GM12878 (cell line): ENCODE measurements at regions of chr7 and their contacts with region 1.

Region 1: GRCh38 chr7:71801996-71802395 is 610.1 kb downstream of the CALN1 start:
- DNase-seq: no peak
- ATAC-seq: no peak
- H3K4me3 ChIP-seq: no peak overlapping the region
- H3K27ac ChIP-seq: no peak overlapping the region
- H3K4me1 ChIP-seq: no peaks in the 10 kb centered on the region
- H3K27me3 ChIP-seq: no peaks in the 10 kb centered on the region
- CTCF ChIP-seq: no peak
- EP300 ChIP-seq: no peak
- POLR2A ChIP-seq: no peak
- RAD21 ChIP-seq: no peak

Region 2: GRCh38 chr7:71868797-71869196 is 66.8 kb after region 1 on chr7:
- CTCF ChIA-PET with region 1: no interaction called
- POLR2A ChIA-PET with region 1: no interaction called
- RAD21 ChIA-PET with region 1: no interaction called
- SMC1A ChIA-PET with region 1: no interaction called
- in situ Hi-C with region 1: no loop called
- intact Hi-C with region 1: loop called (anchors 10 kb)
- DNase-seq: no peak
- ATAC-seq: no peak
- H3K4me3 ChIP-seq: no peak overlapping the region
- H3K27ac ChIP-seq: no peak overlapping the region
- H3K4me1 ChIP-seq: no peaks in the 10 kb centered on the region
- H3K27me3 ChIP-seq: no peaks in the 10 kb centered on the region
- CTCF ChIP-seq: no peak
- EP300 ChIP-seq: no peak
- POLR2A ChIP-seq: no peak
- RAD21 ChIP-seq: no peak

Region 3: DNA sequence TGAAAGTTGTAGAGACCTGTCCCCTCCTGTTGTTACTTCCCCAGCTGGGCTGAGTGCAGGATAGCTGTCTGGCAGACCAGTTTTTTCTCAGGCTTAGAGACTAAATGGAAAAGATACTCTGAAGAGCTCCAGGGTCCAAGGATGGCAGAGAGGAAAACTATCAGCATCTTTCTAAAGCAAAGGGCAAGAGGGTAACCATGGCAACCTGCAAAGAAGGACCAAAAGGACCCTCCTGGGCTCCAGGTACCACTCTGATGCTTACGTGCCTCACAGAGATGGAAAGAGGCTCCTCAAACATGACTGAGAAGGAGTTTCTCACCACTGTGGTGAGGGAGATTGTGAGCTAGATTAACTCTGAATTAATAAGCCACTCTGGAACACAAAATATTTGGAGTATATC is 77.5 kb after region 1 on chr7:
- CTCF ChIA-PET with region 1: no interaction called
- POLR2A ChIA-PET with region 1: no interaction called
- RAD21 ChIA-PET with region 1: no interaction called
- SMC1A ChIA-PET with region 1: no interaction called
- in situ Hi-C with region 1: no loop called
- intact Hi-C with region 1: no loop called
- DNase-seq: no peak
- ATAC-seq: no peak
- H3K4me3 ChIP-seq: no peak overlapping the region
- H3K27ac ChIP-seq: no peak overlapping the region
- H3K4me1 ChIP-seq: no peaks in the 10 kb centered on the region
- H3K27me3 ChIP-seq: no peaks in the 10 kb centered on the region
- CTCF ChIP-seq: no peak
- EP300 ChIP-seq: no peak
- POLR2A ChIP-seq: no peak
- RAD21 ChIP-seq: no peak